Activated CD4-positive, alpha-beta T cell treated with anti-CD3 and anti-CD28 coated beads for 36 hours (primary cell): ENCODE measurements at regions of chr2 and their contacts with region 1.

Region 1: DNA sequence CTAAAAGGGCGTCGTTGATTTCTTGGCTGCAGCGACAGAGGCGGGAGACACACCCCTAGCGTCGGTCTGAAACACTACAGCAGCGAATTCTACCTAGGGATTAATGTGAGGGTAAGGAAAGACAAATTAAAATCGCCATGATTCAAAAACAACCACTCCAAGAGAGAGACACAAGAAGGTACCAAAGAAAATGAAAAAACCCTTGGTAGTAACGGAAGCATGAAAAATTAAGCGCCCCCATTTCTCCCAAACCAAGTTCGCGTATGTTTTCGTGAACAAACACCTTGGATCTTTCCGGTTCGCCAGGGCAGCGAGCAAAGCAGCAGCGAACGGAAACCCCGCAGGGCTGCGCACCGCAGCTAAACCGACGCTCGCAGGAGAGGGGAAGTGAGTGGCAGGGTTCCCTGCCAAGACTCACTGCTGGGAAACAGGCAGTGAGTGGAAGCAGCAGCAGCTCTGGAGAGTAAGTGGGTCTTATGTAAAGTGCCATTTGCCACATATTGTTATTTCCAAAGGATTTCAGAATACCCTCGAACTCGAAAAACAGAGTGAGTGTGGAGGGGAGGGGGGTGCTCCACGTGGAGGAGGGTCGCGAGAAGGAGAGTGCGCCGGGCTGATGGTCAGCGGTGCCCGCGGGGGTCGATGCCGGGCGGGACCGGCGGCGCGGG is 1.0 kb downstream of the PPP3R1 start:
- DNase-seq: peak; percentile 87
- ATAC-seq: peak; percentile 71
- H3K4me3 Mint-ChIP-seq: peak overlapping the region; percentile 98
- H3K27ac Mint-ChIP-seq: peak overlapping the region; percentile 97
- H3K4me1 Mint-ChIP-seq: peaks cover 35% of the 10 kb centered on the region
- H3K27me3 Mint-ChIP-seq: no peaks in the 10 kb centered on the region

Region 2: DNA sequence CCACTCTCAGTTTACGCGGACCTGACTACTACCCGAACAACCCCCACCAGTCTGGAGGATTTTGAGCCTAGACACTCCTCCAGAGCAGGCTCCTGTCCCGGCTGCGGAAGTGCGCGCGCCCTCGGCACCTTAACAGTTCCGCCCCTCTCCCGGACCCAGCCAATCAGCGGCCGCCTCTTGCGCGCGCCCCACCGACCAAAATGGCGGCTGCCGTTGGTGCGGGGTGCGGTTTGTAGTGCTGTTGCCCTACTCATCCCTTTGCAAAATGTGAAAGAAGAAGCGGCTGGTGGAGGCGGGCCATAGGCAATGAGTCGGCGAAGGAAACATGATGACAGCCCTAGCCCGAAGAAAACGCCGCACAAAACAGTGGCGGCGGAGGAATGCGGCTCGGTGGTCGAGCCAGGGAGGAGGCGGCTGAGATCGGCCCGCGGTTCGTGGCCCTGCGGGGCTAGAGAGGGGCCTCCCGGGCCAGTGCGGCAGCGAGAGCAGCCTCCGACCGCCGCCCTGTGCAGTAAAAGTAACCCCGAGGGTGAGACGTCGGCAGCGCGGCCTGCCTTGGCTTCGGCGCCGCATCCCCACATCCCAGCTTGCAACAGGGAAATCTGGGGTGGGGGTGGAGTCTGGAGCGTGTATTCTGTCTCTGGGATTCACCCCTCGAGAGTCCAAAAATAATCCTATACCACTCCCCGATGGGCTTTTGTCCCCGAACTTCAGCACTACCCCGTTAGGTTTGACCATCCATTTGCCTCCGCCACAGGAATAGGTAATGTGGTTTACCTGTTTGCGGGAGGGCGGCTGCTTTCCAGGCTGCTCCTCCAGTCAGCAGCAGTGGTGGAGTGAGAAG is 854.0 kb before region 1 on chr2 and contains the start of gene ETAA1:
- CTCF ChIA-PET with region 1: no interaction called
- POLR2A ChIA-PET with region 1: no interaction called
- intact Hi-C with region 1: loop called in 1 of 2 experiments (anchors 5 kb)
- DNase-seq: peak; percentile 96
- ATAC-seq: peak; percentile 100
- H3K4me3 Mint-ChIP-seq: peak within 1 kb of the TSS; percentile 98
- H3K27ac Mint-ChIP-seq: peak within 1 kb of the TSS; percentile 99
- H3K4me1 Mint-ChIP-seq: peaks cover 12% of the 10 kb centered on the region
- H3K27me3 Mint-ChIP-seq: no peaks in the 10 kb centered on the region
- total RNA-seq, gene ETAA1: 13.7 to 17.1 TPM

Region 3: GRCh38 chr2:67600946-67601345 is 650.4 kb before region 1 on chr2:
- CTCF ChIA-PET with region 1: no interaction called
- POLR2A ChIA-PET with region 1: no interaction called
- intact Hi-C with region 1: no loop called
- DNase-seq: no peak
- ATAC-seq: no peak
- H3K4me3 Mint-ChIP-seq: no peak overlapping the region
- H3K27ac Mint-ChIP-seq: no peak overlapping the region
- H3K4me1 Mint-ChIP-seq: no peaks in the 10 kb centered on the region
- H3K27me3 Mint-ChIP-seq: no peaks in the 10 kb centered on the region

Region 4: DNA sequence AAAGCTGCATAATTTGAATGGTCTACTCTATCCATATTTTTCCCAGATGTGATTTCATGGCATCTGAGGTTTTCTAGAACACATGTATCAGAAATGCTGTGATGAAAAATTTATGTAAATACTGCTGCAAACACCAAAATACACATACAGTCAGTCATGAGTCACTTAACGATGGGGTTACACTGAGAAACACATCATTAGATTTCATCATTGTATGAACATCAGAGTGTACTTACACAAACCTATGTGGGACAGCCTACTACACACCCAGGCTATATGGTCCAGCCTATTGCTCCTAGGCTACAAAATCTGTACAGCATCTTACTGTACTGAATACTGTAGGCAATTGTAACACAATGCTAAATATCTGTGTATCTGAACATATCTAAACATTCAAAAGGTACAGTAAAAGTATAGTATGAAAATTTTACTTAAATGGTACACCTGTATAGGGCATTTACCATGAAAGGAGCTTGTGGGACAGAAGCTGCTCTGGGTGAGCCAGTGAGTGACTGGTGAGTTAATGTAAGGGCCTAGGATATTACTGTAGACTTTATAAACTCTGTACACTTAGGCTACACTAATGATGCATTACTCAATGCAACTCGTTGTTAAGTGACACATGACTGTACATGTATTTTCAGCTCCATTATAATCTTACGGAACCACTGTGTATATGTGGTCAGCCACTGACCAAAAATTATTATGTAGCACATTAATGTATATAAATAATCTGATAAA is 60.2 kb before region 1 on chr2:
- CTCF ChIA-PET with region 1: interaction called, 13 read pairs
- POLR2A ChIA-PET with region 1: interaction called, 3 read pairs
- intact Hi-C with region 1: loop called (anchors 2 to 5 kb)
- DNase-seq: no peak
- ATAC-seq: peak; percentile 89
- H3K4me3 Mint-ChIP-seq: no peak overlapping the region
- H3K27ac Mint-ChIP-seq: peak overlapping the region; percentile 76
- H3K4me1 Mint-ChIP-seq: peaks cover 61% of the 10 kb centered on the region
- H3K27me3 Mint-ChIP-seq: no peaks in the 10 kb centered on the region

Region 5: GRCh38 chr2:68238955-68239822 is 12.1 kb before region 1 on chr2:
- CTCF ChIA-PET with region 1: interaction called, 5 read pairs
- POLR2A ChIA-PET with region 1: interaction called, 3 read pairs
- intact Hi-C with region 1: loop called in 1 of 2 experiments (anchors 1 kb)
- DNase-seq: no peak
- ATAC-seq: peak; percentile 52
- H3K4me3 Mint-ChIP-seq: no peak overlapping the region
- H3K27ac Mint-ChIP-seq: peak overlapping the region; percentile 83
- H3K4me1 Mint-ChIP-seq: peaks cover 79% of the 10 kb centered on the region
- H3K27me3 Mint-ChIP-seq: no peaks in the 10 kb centered on the region

Region 6: DNA sequence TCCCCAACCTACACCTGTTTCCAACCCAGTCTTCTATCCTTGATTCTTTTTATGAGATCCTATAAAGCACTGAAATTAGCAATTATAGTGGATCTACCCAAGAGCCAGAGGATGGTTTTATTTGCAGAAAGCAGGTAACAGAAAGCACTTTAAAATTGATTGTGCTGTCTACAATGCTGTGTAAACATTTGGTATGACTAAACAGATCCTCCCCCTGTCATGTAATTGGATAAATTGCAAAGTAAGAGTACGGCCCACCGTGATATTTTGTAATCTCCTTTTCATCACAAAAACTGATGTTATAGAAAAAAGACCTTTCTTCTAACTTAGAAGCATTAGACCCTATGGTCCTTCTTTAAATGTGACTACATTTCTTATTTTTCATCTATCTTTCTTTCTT is 12.3 kb after region 1 on chr2:
- CTCF ChIA-PET with region 1: no interaction called
- POLR2A ChIA-PET with region 1: no interaction called
- intact Hi-C with region 1: no loop called
- DNase-seq: no peak
- ATAC-seq: no peak
- H3K4me3 Mint-ChIP-seq: no peak overlapping the region
- H3K27ac Mint-ChIP-seq: no peak overlapping the region
- H3K4me1 Mint-ChIP-seq: no peaks in the 10 kb centered on the region
- H3K27me3 Mint-ChIP-seq: peaks cover 3% of the 10 kb centered on the region

Region 7: DNA sequence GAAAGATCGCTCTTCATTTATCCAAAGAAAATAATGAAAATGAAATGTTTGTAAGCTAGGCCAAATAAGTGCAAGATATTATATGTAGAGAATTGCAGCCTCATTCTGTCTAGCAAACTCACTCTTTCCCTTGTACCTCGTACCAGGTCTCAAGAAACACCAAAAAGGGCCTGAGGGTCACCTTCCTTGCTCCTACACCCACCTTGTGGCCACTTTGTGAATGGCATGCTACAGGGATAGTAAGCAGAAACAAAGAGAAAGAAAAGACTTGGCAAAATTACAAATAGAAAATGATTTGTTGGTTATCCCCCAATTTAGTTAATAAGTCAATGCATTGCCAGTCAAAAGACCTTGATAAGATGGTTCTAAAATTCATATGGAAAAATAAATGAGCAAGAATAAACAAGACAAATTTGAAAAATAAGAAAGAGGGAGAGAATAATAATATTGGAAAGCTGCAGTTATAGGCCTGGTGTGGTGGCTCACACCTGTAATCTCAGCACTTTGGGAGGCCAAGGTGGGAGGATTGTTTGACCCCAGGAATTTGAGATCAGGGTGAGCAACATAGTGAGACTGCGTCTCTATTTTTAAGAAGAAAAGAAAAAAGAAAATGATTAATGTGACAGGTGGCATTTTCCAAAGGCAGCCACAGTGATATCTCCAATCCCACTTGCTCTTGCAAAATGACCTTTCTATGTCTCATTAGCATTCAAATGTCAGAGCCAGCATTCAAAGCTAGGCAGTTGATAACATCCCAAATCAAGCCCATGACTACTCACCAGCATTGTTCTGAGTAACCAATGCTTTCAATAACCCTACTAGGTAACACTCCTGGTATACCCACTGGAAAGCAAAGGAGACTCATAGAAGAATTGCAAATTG is 658.7 kb after region 1 on chr2:
- CTCF ChIA-PET with region 1: no interaction called
- POLR2A ChIA-PET with region 1: no interaction called
- intact Hi-C with region 1: loop called in 1 of 2 experiments (anchors 5 kb)
- DNase-seq: peak; percentile 88
- ATAC-seq: peak; percentile 20
- H3K4me3 Mint-ChIP-seq: no peak overlapping the region
- H3K27ac Mint-ChIP-seq: peak overlapping the region; percentile 69
- H3K4me1 Mint-ChIP-seq: peaks cover 36% of the 10 kb centered on the region
- H3K27me3 Mint-ChIP-seq: no peaks in the 10 kb centered on the region

Region 8: DNA sequence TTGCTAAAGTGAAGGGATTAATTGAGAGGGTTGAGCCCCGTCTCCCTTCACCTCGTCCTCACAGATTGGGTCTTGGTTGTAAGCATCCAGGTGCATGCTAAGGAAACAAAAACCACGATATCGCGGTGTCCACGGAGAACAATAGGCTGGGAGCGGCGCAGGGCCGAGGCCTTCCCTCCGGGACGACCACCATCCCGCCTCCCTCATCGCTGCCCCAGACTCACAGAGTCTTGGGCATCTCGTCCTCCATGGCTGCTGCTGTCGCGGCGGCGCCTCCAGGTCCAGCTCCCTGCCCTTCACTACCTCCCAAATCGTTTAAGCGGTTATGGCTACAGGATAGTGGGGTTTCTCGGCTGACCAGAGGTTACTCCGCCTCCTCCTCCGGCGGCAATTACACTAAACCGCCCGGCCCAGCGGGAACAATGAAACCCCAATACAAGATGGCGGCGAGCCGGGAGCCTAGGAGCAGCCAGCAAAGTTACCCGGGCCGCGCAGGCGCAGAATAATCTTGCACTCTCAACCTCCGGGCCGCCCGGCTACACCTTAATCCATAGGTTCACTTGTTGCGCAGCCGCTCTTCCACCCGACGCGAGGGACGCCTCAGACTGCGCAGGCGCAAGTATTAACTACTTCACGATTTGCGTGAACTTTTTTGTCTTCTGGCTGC is 1997.0 kb after region 1 on chr2 and contains the start of gene TIA1:
- CTCF ChIA-PET with region 1: no interaction called
- POLR2A ChIA-PET with region 1: no interaction called
- intact Hi-C with region 1: loop called in 1 of 2 experiments (anchors 5 kb)
- DNase-seq: peak; percentile 99
- ATAC-seq: peak; percentile 98
- H3K4me3 Mint-ChIP-seq: peak within 1 kb of the TSS; percentile 98
- H3K27ac Mint-ChIP-seq: peak within 1 kb of the TSS; percentile 97
- H3K4me1 Mint-ChIP-seq: peaks cover 30% of the 10 kb centered on the region
- H3K27me3 Mint-ChIP-seq: no peaks in the 10 kb centered on the region
- total RNA-seq, gene TIA1: 85.4 to 98.3 TPM